ENCODE measurements at regions of chr15 and their contacts with region 1.

Region 1: DNA sequence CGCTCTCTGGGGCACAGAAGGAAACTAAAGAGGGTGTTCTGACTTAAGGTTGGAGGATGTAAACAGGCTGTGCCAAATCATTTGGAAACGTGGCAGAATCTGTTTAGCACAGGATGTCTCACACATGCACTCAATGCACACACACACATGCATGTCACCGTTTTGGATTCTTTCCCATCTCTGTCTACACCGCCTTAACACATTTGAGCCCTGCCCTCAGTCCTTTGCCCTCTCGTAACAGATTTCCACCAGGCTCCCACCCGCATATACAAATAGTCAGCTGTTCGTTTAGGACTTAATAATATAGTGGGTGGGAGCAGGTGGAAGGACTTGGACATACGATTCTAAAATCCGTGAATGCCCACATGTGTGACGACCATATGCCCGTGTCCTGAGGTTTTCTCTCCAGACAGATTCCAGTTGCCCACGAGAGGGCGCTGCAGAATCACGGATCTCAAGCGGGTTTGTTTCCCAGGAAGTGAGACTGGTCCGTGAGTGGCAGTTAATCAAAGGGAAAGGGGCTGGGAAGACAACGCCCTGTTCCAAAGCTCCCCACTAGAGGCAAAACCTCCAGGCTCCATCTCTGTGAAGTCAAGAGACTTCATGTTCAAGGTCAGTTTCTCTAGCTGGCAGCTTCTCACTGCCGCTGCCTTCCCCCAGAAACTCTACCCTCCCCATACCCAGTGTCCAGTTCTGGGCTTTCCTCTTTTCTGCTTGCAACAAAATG is 44.5 kb downstream of the NOX5 start:
- DNase-seq: peak; percentile 89
- ATAC-seq: peak; percentile 78

Region 2: DNA sequence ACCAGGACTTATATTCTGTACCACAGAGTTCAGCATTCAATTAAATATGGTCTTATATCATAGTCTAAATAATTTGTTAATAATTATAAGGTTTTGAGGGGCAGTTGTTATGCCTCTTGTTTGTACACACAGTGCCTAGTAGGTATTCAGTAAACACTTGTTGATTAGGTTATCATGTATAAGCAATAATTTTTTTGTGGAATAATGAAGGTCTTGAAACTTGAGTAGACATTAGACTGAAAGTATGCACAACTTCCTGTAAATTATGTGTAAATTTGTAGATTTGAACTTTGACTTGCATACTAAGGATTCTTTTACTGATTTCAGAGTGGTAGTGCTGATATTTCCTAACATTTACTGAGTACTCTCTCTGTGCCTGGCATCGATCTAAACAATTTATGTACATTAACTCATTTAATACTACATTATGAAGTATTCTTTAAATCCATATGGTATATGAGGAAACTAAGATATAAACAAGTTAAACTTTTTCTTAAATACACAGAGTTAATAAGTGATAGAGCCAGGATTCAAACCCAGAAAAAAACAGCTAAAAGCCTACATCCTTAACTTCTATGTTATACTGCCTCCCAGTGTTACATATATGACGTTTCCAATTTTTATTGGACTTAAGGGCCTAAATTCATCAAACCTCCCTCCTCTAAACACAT is 166.5 kb after region 1 on chr15:
- intact Hi-C with region 1: loop called (anchors 1 kb)
- DNase-seq: no peak
- ATAC-seq: no peak

Region 3: GRCh38 chr15:69265347-69265955 is 206.5 kb after region 1 on chr15:
- intact Hi-C with region 1: loop called (anchors 1 kb)
- DNase-seq: no peak
- ATAC-seq: no peak